Spleen (tissue), 13 donors: ENCODE measurements at regions of chr2 and their contacts with region 1.

Region 1: GRCh38 chr2:20638646-20639430 is 12.1 kb downstream of the HS1BP3 start:
- DNase-seq: peak; percentile 57
- H3K4me3 ChIP-seq: no peak overlapping the region
- H3K27ac ChIP-seq: no peak overlapping the region
- H3K4me1 ChIP-seq: peaks cover 12 to 40% (median 29%) of the 10 kb centered on the region in 6 donors
- H3K27me3 ChIP-seq: no peaks in the 10 kb centered on the region
- CTCF ChIP-seq: no peak
- POLR2A ChIP-seq: no peak

Region 2: GRCh38 chr2:20443276-20443920 is 195.4 kb before region 1 on chr2:
- intact Hi-C with region 1: loop called (anchors 2 kb)
- DNase-seq: peak; percentile 62
- H3K4me3 ChIP-seq: no peak overlapping the region
- H3K27ac ChIP-seq: peak overlapping the region in 5 of 8 donors; percentile 3 to 44 (median 34)
- H3K4me1 ChIP-seq: peaks cover 0 to 62% (median 31%) of the 10 kb centered on the region in 6 donors
- H3K27me3 ChIP-seq: peaks cover 0 to 27% (median 0%) of the 10 kb centered on the region in 7 donors
- CTCF ChIP-seq: peak in 9 of 11 experiments; percentile 29 to 61 (median 53)
- POLR2A ChIP-seq: no peak

Region 3: DNA sequence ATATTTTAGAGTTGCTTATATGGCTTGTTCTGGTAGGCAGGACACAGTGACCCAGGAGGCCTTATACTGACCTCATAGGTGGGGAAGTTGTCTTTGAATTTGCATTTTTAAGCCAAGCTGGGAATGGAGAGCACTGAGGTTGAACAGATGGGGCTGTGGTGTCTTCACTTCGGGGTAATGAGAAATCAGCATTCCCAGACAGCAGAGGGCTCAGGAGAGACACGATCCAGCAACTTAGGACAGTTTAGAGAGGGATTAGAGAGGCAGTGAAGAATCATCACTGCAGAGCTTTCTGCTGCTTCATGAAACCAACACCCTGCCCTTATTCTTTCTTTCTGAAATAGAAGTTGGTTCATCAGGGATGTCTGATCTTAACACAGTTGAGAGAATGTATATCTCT is 687.3 kb after region 1 on chr2:
- intact Hi-C with region 1: no loop called
- DNase-seq: no peak
- H3K4me3 ChIP-seq: no peak overlapping the region
- H3K27ac ChIP-seq: no peak overlapping the region
- H3K4me1 ChIP-seq: no peaks in the 10 kb centered on the region
- H3K27me3 ChIP-seq: no peaks in the 10 kb centered on the region
- CTCF ChIP-seq: no peak
- POLR2A ChIP-seq: no peak